CD8-positive, alpha-beta T cell (primary cell): ENCODE measurements at regions of chr3 and their contacts with region 1.

Region 1: DNA sequence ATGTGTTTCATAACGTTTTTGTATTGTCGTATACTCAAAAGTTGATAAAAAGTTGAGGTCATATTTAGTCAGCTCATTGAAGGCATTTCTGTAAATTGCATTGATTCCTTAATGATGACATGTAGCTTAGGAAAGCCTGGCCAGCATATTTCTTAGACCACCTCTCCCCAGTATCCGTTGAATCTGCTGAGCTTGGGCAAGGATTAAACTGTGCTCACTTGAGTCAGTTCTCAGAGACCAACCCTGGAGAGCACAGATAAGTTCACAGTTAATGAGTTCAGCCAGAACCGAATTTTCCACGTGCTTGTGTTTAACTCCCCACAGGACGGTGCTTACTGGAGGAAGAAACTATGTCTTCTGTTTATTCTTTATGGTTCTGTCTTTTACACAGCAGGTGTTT is 132.7 kb downstream of the SLC25A26 start:
- DNase-seq: peak in 1 of 9 experiments; percentile 10
- ATAC-seq: no peak
- H3K4me3 ChIP-seq: no peak overlapping the region
- H3K4me3 Mint-ChIP-seq: no peak overlapping the region
- H3K27ac ChIP-seq: peak overlapping the region in 1 of 2 experiments; percentile 58
- H3K27ac Mint-ChIP-seq: peak overlapping the region; percentile 46
- H3K4me1 ChIP-seq: no peaks in the 10 kb centered on the region
- H3K4me1 Mint-ChIP-seq: peaks cover 16% of the 10 kb centered on the region
- H3K27me3 ChIP-seq: no peaks in the 10 kb centered on the region
- H3K27me3 Mint-ChIP-seq: no peaks in the 10 kb centered on the region
- CTCF ChIP-seq: no peak

Region 2: DNA sequence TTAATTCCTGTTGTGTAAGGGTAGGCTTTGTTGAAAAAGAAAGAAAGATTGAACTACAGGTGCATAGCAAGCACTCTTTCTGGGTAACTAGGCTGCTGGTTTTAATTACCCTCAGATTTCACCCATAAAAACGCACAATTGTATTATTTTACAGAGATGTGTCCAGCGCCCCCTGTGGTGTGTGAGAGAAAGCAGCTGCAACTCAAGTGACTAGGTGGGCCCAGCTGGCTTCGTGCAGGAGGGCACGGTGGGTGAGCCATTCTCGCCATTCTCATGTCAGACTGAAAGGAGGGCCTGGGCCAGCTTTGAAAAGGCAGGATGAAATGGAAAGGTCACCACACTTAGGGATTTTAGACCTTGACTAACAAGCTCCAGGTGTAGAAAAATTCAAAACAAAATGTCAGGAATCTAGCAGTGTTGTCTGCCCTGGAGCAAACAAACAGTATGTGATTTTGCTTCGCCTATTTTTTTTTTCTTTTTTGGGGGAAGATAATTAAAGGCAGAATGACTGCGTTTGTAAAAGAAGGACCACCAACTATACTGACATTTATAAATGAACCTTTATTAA is 24.8 kb after region 1 on chr3:
- CTCF ChIA-PET with region 1: interaction called, 12 read pairs
- POLR2A ChIA-PET with region 1: no interaction called
- intact Hi-C with region 1: no loop called
- DNase-seq: peak in 7 of 9 experiments; percentile 15 to 67 (median 46)
- ATAC-seq: peak; percentile 61
- H3K4me3 ChIP-seq: no peak overlapping the region
- H3K4me3 Mint-ChIP-seq: no peak overlapping the region
- H3K27ac ChIP-seq: peak overlapping the region in 1 of 2 experiments; percentile 37
- H3K27ac Mint-ChIP-seq: peak overlapping the region; percentile 86
- H3K4me1 ChIP-seq: no peaks in the 10 kb centered on the region
- H3K4me1 Mint-ChIP-seq: peaks cover 7% of the 10 kb centered on the region
- H3K27me3 ChIP-seq: no peaks in the 10 kb centered on the region
- H3K27me3 Mint-ChIP-seq: no peaks in the 10 kb centered on the region
- CTCF ChIP-seq: peak; percentile 56